ENCODE measurements at regions of chr1 and their contacts with region 1.

Region 1: GRCh38 chr1:230327892-230328284 is 98.2 kb downstream of the PGBD5 start:
- DNase-seq: no peak
- ATAC-seq: no peak
- H3K4me3 ChIP-seq: no peak overlapping the region
- H3K27ac ChIP-seq: no peak overlapping the region
- H3K4me1 ChIP-seq: no peaks in the 10 kb centered on the region
- H3K27me3 ChIP-seq: no peaks in the 10 kb centered on the region
- CTCF ChIP-seq: no peak
- POLR2A ChIP-seq: no peak

Region 2: GRCh38 chr1:229674042-229674441 is 653.8 kb before region 1 on chr1:
- in situ Hi-C with region 1: loop called in 1 of 4 experiments (anchors 10 kb)
- intact Hi-C with region 1: no loop called
- DNase-seq: no peak
- ATAC-seq: no peak
- H3K4me3 ChIP-seq: no peak overlapping the region
- H3K27ac ChIP-seq: no peak overlapping the region
- H3K4me1 ChIP-seq: no peaks in the 10 kb centered on the region
- H3K27me3 ChIP-seq: no peaks in the 10 kb centered on the region
- CTCF ChIP-seq: no peak
- POLR2A ChIP-seq: no peak

Region 3: GRCh38 chr1:230350208-230350921 is 22.5 kb after region 1 on chr1:
- in situ Hi-C with region 1: no loop called
- intact Hi-C with region 1: no loop called
- DNase-seq: peak; percentile 76 to 84
- ATAC-seq: peak; percentile 95 to 97
- H3K4me3 ChIP-seq: no peak overlapping the region
- H3K27ac ChIP-seq: peak overlapping the region; percentile 5 to 74 (median 46)
- H3K4me1 ChIP-seq: peaks cover 10 to 17% of the 10 kb centered on the region in 2 donors
- H3K27me3 ChIP-seq: no peaks in the 10 kb centered on the region
- CTCF ChIP-seq: peak in 2 of 5 experiments; percentile 16 to 18
- POLR2A ChIP-seq: no peak